Activated CD4-positive, alpha-beta T cell treated with anti-CD3 and anti-CD28 coated beads, Interleukin-2, amount 10 ng/mL, durations not matched to agents 7 days and 5 days (primary cell): ENCODE measurements at regions of chr3 and their contacts with region 1.

Region 1: GRCh38 chr3:187738331-187739093 is 6.8 kb downstream of the BCL6 start:
- DNase-seq: peak; percentile 78
- H3K4me3 Mint-ChIP-seq: peak overlapping the region; percentile 97
- H3K27ac Mint-ChIP-seq: peak overlapping the region; percentile 100
- H3K4me1 Mint-ChIP-seq: peaks cover 52% of the 10 kb centered on the region
- H3K27me3 Mint-ChIP-seq: no peaks in the 10 kb centered on the region

Region 2: GRCh38 chr3:187725653-187726370 is 12.7 kb before region 1 on chr3:
- CTCF ChIA-PET with region 1: interaction called, 16 read pairs
- POLR2A ChIA-PET with region 1: no interaction called
- DNase-seq: no peak
- H3K4me3 Mint-ChIP-seq: no peak overlapping the region
- H3K27ac Mint-ChIP-seq: no peak overlapping the region
- H3K4me1 Mint-ChIP-seq: no peaks in the 10 kb centered on the region
- H3K27me3 Mint-ChIP-seq: no peaks in the 10 kb centered on the region

Region 3: DNA sequence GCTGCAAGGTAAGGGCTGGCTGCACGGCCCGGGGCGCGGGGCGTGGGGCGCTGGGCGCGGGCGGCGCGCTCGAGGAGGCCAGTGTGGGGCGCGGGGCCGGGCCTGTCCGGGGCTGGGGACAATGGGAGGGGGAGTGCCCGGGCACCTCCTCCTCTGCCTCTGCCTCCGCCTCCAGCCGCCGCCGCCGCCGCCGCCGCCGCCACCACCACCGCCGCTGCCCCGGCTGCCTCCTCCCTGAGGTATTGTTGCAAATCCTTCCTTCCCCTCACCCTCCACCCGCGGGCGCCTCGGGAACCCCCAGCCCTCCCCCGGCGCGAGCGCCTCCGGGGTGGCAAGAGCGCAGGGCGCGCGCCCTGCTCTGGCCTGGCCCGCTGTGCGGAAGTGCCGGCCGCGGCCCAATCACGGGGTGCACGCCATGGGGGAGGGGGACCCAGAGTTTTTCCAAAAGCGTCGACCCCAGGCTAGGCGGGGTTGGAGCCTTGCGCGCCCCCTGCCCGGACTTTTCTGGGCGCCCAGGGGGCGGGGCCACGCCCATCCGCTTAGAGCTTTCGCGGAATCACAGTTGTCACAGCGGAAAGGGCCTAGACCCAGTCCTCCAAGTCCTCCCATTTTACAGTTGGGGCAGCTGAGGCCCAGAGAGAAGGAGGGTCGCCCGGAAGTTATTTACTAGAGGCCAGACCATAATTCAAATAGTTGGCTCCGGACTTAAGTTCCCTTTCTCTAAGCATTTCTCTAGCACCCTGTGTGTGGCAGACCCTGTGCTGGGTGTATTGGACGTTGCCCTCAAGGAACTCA is 415.7 kb after region 1 on chr3 and contains the start of gene LPP:
- CTCF ChIA-PET with region 1: interaction called, 12 read pairs
- POLR2A ChIA-PET with region 1: no interaction called
- DNase-seq: peak; percentile 86
- H3K4me3 Mint-ChIP-seq: peak within 1 kb of the TSS; percentile 81
- H3K27ac Mint-ChIP-seq: peak within 1 kb of the TSS; percentile 93
- H3K4me1 Mint-ChIP-seq: peaks cover 67% of the 10 kb centered on the region
- H3K27me3 Mint-ChIP-seq: no peaks in the 10 kb centered on the region
- total RNA-seq, gene LPP: 63.6 to 70.3 TPM

Region 4: DNA sequence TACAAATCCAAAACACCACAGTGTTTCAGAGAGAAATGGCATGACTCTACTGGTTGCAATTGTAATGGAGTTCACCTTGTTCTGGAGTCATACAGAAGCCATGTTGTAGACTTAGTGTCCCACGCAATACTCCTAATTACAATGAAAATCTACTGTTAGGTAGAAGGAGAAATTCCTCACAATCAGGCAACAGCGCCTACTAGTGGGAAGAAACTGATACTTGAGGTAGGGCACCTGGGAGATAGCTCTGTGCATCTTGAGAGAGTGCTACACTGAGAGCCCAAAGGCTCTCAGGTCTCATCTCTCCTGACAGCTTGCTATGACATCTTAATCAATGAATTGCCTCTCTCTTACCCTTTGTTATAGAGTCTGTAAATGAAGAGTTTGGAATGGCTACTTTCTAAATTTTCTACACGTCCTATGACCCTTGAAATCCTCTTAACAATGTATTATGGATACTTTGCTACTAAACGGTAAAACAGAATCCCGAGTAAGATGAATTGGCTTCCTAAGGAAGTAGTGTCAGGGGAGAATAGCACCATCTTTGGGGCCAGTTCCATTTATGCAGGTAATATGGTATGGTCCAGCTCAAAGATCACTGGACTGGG is 1010.6 kb after region 1 on chr3:
- CTCF ChIA-PET with region 1: interaction called, 43 read pairs
- POLR2A ChIA-PET with region 1: no interaction called
- DNase-seq: peak; percentile 63
- H3K4me3 Mint-ChIP-seq: no peak overlapping the region
- H3K27ac Mint-ChIP-seq: no peak overlapping the region
- H3K4me1 Mint-ChIP-seq: peaks cover 11% of the 10 kb centered on the region
- H3K27me3 Mint-ChIP-seq: no peaks in the 10 kb centered on the region

Region 5: DNA sequence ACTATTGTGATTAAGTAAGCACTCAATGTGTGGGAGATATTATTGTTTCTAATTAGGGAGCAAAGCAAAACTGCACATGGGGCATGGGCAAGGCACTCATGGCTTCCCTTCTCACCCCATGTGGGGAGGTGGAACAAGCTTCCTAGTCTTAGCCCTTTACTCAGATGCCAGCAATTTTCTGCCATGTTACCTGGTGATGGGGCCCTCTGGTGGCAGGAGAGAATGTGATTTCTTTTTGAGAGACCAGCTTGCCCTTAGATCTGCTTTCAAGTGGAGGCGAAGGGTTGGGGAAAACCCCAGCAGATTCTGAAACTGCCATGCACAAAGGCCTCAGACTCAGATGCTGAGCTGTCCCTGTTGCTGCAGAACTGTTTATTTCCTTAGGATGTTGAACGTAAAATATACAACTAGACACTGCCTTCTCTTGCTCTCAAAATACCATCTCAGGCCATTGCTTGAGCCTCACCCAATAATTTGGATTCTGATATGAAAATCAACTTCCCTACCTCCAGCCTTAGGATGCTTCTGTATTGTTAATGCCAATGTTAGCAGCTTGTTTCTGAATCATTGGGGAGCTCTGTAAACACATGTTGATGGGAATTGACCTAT is 1303.1 kb after region 1 on chr3:
- CTCF ChIA-PET with region 1: interaction called, 47 read pairs
- POLR2A ChIA-PET with region 1: no interaction called
- DNase-seq: peak; percentile 86
- H3K4me3 Mint-ChIP-seq: no peak overlapping the region
- H3K27ac Mint-ChIP-seq: peak overlapping the region; percentile 12
- H3K4me1 Mint-ChIP-seq: peaks cover 48% of the 10 kb centered on the region
- H3K27me3 Mint-ChIP-seq: no peaks in the 10 kb centered on the region

Region 6: DNA sequence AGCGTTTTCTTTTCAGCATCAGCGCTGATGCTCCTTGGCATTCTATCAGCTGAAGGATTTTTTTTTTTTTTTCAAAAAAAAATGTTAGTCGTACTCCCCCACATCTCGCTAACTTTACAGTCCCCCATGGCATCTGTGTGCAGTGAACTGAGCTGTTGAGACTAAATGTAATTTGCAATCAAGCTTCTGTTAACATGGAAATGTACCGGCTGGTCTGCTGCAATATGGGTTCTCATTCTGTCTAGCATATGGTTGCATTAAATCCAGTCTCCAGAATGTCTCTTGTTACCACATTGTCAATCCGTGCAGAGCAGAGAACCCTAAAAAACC is 1401.1 kb after region 1 on chr3:
- CTCF ChIA-PET with region 1: interaction called, 25 read pairs
- POLR2A ChIA-PET with region 1: interaction called, 4 read pairs
- DNase-seq: no peak
- H3K4me3 Mint-ChIP-seq: no peak overlapping the region
- H3K27ac Mint-ChIP-seq: no peak overlapping the region
- H3K4me1 Mint-ChIP-seq: peaks cover 30% of the 10 kb centered on the region
- H3K27me3 Mint-ChIP-seq: peaks cover 2% of the 10 kb centered on the region